Activated CD4-positive, alpha-beta memory T cell treated with anti-CD3 and anti-CD28 coated beads for 36 hours (primary cell): ENCODE measurements at regions of chr22 and their contacts with region 1.

Region 1: GRCh38 chr22:20283674-20284066 is 15.6 kb upstream of the RTN4R start:
- DNase-seq: no peak
- H3K4me3 Mint-ChIP-seq: no peak overlapping the region
- H3K27ac Mint-ChIP-seq: no peak overlapping the region
- H3K4me1 Mint-ChIP-seq: no peaks in the 10 kb centered on the region
- H3K27me3 Mint-ChIP-seq: peaks cover 2% of the 10 kb centered on the region

Region 2: DNA sequence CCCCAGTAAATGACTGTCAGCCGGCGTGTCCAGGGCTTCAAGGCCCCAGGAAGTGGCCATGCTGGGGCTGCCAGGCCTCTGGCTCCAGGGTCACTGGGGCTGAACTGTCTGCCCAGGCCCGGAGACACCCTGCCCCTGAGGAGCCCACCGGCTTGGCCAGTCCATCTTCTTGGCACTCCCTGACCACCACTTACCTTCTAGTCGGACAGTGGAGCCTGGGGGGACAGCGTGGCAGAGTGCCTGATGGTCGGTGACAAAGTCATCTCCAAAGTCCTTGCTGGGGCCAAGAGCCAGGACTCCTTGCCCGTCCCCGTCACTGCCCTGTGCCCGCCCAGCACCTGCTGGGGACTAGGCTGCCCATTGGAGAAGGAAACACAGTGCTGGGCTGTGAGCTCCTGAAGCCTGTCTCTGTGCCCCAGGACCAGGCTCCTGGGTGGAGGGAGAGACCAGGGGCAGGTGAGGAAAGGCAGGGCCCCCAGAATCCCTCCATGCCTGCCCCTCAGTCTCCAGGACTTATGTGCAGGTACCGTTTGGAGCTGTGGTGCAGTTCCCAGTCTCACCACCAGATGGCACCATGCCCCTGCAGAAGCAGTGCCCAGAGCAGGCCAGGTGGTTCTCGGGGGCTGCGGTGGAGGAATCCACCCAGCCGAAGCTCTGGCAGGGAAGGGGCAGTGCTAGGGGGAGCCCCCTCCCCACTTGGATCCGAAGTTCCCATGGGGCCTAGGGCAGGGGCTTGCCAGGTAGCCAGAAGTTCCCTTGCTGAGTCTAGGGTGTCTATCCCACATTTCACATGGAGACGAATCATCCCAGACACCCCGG is 126.8 kb before region 1 on chr22:
- CTCF ChIA-PET with region 1: interaction called, 48 read pairs
- POLR2A ChIA-PET with region 1: no interaction called
- intact Hi-C with region 1: loop called (anchors 1 kb)
- DNase-seq: peak; percentile 90
- H3K4me3 Mint-ChIP-seq: no peak overlapping the region
- H3K27ac Mint-ChIP-seq: no peak overlapping the region
- H3K4me1 Mint-ChIP-seq: no peaks in the 10 kb centered on the region
- H3K27me3 Mint-ChIP-seq: peaks cover 3% of the 10 kb centered on the region

Region 3: DNA sequence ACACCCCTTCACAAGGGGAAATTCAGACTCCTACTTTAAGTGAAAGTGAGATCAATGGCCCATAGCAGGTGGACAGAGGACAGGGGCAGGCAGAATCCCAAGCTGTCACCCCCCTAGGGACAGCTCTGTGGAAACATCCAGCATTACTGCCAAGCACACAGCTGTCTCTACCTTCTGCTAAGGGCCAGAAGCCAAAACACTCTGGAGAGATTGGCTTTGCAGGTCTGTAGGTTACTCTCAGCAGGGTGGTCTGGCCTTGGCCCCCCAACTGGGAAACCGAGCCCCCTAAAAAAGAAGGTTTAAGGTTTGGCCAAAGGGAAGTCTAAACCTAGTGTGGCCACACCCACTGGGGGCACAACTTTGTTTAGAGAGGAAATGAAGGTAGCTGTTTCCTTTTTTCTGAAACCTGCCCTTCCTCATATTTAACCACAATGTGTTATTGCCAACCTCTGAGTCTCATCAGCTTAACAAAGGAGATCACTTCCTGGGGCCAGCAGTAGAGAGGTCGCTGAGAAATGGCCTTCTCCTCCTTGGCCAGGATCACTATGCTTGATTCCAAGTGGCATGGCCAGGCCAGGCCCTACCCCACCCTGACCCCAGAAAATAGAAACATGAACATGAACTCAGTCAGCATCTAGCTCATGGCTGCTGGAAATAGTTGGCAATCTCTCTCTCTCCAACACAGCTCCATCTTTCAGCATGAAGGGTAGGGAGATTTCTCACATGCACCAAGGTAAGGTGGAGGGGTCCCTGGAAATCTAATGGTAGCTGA is 179.8 kb after region 1 on chr22:
- CTCF ChIA-PET with region 1: no interaction called
- POLR2A ChIA-PET with region 1: no interaction called
- intact Hi-C with region 1: no loop called
- DNase-seq: peak; percentile 35
- H3K4me3 Mint-ChIP-seq: peak overlapping the region; percentile 35
- H3K27ac Mint-ChIP-seq: peak overlapping the region; percentile 94
- H3K4me1 Mint-ChIP-seq: peaks cover 54% of the 10 kb centered on the region
- H3K27me3 Mint-ChIP-seq: no peaks in the 10 kb centered on the region